Posterior vena cava (tissue), 2 donors: ENCODE measurements at regions of chr5 and their contacts with region 1.

Region 1: DNA sequence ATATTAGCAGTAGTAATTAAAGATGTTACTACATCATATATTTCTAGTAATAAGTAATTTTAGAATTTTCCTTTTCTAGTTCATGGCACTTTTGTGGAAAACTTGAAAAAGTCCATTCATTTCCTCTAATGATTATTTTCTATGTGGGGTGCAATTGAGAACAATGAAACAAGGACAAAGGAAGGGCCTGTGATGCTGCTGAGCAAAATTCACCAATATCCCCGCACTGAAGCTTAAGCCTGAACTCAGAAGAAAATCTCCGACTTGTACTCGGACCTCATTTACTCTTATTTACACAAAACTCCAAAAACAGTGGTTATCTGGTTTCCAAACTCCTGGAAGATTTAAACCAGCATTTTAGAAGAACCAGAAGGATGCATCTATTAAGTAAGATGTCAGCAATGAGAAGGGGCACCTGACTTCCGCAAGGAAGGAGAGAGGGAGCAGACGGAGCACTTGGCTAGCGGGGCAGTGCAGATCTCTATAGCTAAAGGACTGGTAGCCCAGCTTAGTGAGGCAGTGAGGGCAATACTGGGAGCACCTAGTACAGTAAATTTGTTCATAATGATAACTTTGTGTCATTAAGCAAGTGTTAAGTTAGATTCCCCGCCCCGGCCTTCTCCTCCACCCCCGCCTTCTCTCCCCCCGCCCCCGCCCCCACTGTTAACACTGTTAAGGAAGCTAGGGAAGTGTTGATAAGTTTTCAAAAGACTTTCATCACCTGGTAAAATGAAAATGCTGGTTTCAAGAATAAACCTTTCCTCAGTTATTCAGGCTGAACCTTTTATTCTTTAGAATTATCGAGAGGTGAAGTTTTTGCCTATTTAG is 123.3 kb downstream of the ZSWIM6 start:
- DNase-seq: no peak

Region 2: DNA sequence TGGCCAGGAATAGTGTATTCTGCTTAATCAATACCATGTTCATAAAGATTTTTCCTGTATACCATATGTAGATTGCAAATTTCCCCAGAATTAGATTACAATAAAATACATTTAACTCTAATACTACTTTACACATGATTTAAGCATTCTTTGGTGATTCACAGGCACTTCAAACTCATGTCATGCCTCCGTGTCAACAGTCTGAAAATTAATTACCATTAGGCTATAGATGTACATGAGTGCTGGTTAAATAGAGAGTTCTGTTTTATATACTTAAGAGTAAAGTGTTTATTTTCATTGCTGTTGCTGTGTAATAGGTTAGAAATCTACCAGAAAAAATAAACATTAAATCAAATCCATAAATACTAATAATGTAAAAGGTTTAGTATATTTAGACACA is 36.5 kb after region 1 on chr5:
- intact Hi-C with region 1: loop called in 1 of 2 experiments (anchors 5 kb)
- DNase-seq: no peak